ENCODE measurements at regions of chr16 and their contacts with region 1.

Region 1: GRCh38 chr16:30637942-30638341 is 12.8 kb upstream of the PRR14 start:
- DNase-seq: no peak
- ATAC-seq: no peak
- H3K4me3 ChIP-seq: no peak overlapping the region
- H3K27ac ChIP-seq: no peak overlapping the region
- H3K4me1 ChIP-seq: peaks cover 16% of the 10 kb centered on the region
- H3K27me3 ChIP-seq: no peaks in the 10 kb centered on the region
- CTCF ChIP-seq: peak; percentile 5

Region 2: DNA sequence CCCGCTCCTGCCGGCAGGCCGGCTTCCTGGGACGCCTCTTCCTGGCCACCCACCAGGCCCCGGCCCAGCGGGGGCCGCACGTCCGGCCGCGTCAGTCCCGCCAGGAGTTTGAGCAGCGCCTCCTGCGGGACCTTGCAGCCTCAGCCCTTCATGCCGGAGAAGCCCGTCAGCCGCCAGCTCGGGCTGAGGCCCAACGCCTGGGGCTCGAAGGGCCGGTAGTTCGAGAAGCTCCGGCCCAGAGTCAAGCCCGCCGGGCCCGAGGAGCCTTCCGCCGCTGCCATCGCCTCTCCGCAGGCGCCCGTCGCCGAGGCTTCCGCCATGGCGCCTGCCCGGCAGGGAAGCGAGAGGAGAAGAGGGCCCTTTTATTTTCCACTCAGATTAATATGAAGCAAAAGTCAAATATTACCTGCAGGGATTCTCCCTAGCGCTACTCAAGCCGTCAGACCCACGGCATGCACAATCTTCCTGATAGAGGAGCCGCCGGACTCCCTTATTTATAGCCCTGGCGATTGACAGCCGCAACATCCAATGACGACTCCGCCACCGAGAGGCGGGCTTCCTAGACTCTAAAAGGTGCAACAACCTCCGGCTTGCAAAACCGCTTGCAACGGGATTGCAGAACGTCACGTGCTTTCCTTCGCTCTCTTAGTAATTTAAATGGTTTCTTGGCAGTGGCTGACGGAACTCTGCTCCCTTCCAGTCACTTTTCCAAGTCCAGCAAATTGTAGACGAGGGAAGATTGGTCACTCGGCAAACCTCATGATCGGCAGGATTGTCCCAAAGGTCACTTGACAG is 192.3 kb before region 1 on chr16 and contains the start of gene SEPHS2:
- intact Hi-C with region 1: loop called in 1 of 2 experiments (anchors 10 kb)
- DNase-seq: peak; percentile 98 to 99
- ATAC-seq: peak; percentile 94 to 96 (median 96)
- H3K4me3 ChIP-seq: peak within 1 kb of the TSS; percentile 97
- H3K27ac ChIP-seq: peak within 1 kb of the TSS; percentile 100
- H3K4me1 ChIP-seq: peaks cover 22% of the 10 kb centered on the region
- H3K27me3 ChIP-seq: no peaks in the 10 kb centered on the region
- CTCF ChIP-seq: peak; percentile 39
- total RNA-seq, gene SEPHS2: 25.4 to 61.4 (median 46.9) TPM

Region 3: DNA sequence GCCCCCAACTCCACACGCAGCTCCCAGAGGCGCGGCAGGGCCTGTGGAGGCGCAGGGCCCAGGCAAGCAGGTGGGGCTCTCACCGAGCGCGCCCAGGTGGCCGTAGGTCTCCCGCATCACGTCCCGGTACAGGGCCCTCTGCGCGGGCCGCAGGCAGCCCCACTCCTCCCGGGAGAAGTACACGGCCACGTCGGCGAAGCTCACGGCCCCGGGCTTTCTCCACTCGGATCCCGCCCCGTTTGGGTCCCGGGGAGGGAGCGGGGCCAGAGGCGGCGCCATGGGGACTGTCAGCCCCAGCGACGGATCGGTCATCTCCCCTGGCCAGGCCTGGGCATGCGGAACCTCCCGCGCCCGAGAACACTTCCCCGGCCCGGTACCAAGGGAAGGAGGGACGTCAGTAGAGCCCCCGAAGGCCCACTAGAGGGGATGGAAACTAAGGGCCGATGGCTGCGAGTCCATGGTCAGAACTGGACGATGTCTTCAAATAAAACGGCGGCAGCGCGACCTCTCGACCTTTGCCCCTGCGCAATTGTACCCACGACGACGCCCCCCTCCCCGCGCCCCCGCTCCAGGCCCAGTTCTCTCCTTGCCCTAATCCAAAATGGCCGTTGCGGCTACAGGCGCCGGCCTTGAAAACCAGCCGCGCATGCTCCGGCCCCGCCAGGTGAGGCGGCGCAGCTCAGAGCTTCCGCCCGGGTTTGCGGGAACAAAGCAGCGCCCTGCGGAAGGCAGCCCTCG is 103.4 kb before region 1 on chr16 and contains the start of gene ZNF747:
- intact Hi-C with region 1: loop called in 1 of 2 experiments (anchors 10 kb)
- DNase-seq: peak; percentile 95 to 97
- ATAC-seq: peak; percentile 91 to 94 (median 92)
- H3K4me3 ChIP-seq: peak within 1 kb of the TSS; percentile 94
- H3K27ac ChIP-seq: peak within 1 kb of the TSS; percentile 97
- H3K4me1 ChIP-seq: peaks cover 17% of the 10 kb centered on the region
- H3K27me3 ChIP-seq: no peaks in the 10 kb centered on the region
- CTCF ChIP-seq: peak; percentile 0
- total RNA-seq, gene ZNF747: 6.4 to 16.4 (median 8.9) TPM

Region 4: GRCh38 chr16:30585400-30586189 is 52.3 kb before region 1 on chr16 and contains the start of gene ZNF785:
- intact Hi-C with region 1: loop called in 1 of 2 experiments (anchors 5 kb)
- DNase-seq: peak; percentile 96 to 97
- ATAC-seq: peak; percentile 99 to 100 (median 100)
- H3K4me3 ChIP-seq: peak within 1 kb of the TSS; percentile 81
- H3K27ac ChIP-seq: peak within 1 kb of the TSS; percentile 87
- H3K4me1 ChIP-seq: peaks cover 11% of the 10 kb centered on the region
- H3K27me3 ChIP-seq: no peaks in the 10 kb centered on the region
- CTCF ChIP-seq: peak; percentile 10
- total RNA-seq, gene ZNF785: 3.4 to 5.4 (median 3.9) TPM

Region 5: GRCh38 chr16:30677931-30678585 is 40.1 kb after region 1 on chr16:
- intact Hi-C with region 1: no loop called
- DNase-seq: no peak
- ATAC-seq: no peak
- H3K4me3 ChIP-seq: no peak overlapping the region
- H3K27ac ChIP-seq: no peak overlapping the region
- H3K4me1 ChIP-seq: no peaks in the 10 kb centered on the region
- H3K27me3 ChIP-seq: no peaks in the 10 kb centered on the region
- CTCF ChIP-seq: no peak

Measured in psoas muscle (tissue), 8 donors.